ENCODE measurements at regions of chr1 and their contacts with region 1.

Region 1: GRCh38 chr1:173758980-173759609 is 44.3 kb downstream of the KLHL20 start:
- DNase-seq: no peak
- ATAC-seq: no peak
- H3K4me3 ChIP-seq: no peak overlapping the region
- H3K27ac ChIP-seq: no peak overlapping the region
- H3K4me1 ChIP-seq: no peaks in the 10 kb centered on the region
- H3K27me3 ChIP-seq: no peaks in the 10 kb centered on the region
- CTCF ChIP-seq: no peak

Region 2: DNA sequence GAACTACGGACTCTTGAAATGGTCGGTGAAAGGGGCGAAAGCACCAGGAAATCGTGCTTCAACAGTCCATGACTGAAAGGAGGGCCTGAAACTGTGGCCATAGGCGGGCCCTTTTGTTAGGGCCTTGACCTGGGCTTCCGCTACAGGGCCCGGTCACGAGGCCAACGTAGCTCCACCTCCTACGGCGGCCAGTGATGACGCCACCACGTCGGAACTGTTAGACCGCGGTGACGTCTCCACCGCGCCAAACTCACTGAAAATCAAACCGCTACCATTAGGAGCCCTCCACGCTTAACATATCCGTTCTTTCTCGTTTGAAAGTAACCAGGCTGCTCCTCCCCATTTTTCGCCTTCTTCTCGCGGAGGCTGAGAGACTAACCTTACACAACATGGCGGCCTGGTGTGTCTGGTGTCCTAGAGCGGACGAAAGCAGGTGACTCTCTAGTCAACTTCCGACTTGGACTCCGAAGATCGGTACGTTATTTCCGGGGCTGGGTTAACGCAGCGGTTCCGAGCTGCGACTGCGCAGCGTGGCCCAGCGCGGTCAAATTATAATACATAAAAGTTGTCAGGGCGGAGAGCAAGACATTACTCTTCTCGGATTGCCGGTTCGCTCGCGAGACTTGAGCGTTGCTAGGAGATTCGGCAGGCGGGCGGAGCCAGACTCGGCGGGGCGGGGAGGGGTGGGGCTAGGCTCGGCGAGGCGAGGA is 1240.3 kb after region 1 on chr1:
- CTCF ChIA-PET with region 1: no interaction called
- POLR2A ChIA-PET with region 1: interaction called, 10 read pairs
- in situ Hi-C with region 1: no loop called
- intact Hi-C with region 1: no loop called
- DNase-seq: peak; percentile 99
- ATAC-seq: peak; percentile 94
- H3K4me3 ChIP-seq: peak overlapping the region; percentile 82 to 99
- H3K27ac ChIP-seq: peak overlapping the region; percentile 100
- H3K4me1 ChIP-seq: peaks cover 23% of the 10 kb centered on the region
- H3K27me3 ChIP-seq: no peaks in the 10 kb centered on the region
- CTCF ChIP-seq: no peak